ENCODE measurements at regions of chr15 and their contacts with region 1.

Region 1: DNA sequence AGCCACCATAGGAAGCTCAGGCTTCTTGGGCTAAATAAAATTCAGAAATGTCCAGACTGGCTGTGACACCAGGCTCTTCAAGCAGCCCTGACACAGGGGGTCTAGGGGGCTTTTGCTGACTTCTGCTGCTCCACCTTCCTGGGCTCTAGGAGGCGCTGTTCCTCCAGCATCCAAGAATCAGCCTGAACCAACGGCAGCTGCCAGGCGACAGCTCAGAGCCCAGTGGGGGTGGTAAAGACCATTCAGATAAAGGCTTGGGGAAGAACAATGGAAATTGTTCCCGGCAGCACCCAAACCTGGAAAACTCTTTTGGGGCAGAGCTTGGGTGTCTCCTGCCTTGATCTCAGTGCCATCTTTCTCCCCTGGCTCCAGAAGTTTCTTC is 21.6 kb upstream of the PSTPIP1 start:
- DNase-seq: peak; percentile 86
- ATAC-seq: peak; percentile 81
- H3K4me3 Mint-ChIP-seq: no peak overlapping the region
- H3K27ac Mint-ChIP-seq: no peak overlapping the region
- H3K4me1 Mint-ChIP-seq: peaks cover 17% of the 10 kb centered on the region
- H3K27me3 Mint-ChIP-seq: no peaks in the 10 kb centered on the region

Region 2: GRCh38 chr15:76961268-76962011 is 11.9 kb before region 1 on chr15:
- CTCF ChIA-PET with region 1: interaction called, 10 read pairs
- POLR2A ChIA-PET with region 1: no interaction called
- intact Hi-C with region 1: no loop called
- DNase-seq: no peak
- ATAC-seq: no peak
- H3K4me3 Mint-ChIP-seq: no peak overlapping the region
- H3K27ac Mint-ChIP-seq: no peak overlapping the region
- H3K4me1 Mint-ChIP-seq: no peaks in the 10 kb centered on the region
- H3K27me3 Mint-ChIP-seq: peaks cover 4% of the 10 kb centered on the region

Region 3: DNA sequence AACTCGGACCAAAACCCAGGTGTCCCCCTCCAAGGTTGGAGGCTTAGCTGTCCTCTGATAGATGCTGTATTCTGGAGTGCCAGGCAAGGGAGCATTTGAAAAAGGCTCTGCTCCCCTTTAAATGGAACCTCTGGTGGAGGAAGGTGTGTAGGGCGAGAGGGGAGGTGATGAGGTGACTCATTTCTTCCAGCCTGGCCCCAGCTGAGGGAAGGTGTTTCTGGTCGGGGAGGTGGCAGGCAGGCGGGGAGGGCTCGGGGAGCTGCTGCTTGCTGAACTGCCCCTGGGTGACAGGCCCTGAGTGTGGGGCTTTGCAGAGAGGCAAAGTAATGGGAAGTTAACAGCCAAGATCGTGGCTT is 40.4 kb after region 1 on chr15:
- CTCF ChIA-PET with region 1: interaction called, 13 read pairs
- POLR2A ChIA-PET with region 1: no interaction called
- intact Hi-C with region 1: loop called in 1 of 2 experiments (anchors 5 kb)
- DNase-seq: peak; percentile 95
- ATAC-seq: peak; percentile 89
- H3K4me3 Mint-ChIP-seq: peak overlapping the region; percentile 54
- H3K27ac Mint-ChIP-seq: peak overlapping the region; percentile 90
- H3K4me1 Mint-ChIP-seq: peaks cover 92% of the 10 kb centered on the region
- H3K27me3 Mint-ChIP-seq: no peaks in the 10 kb centered on the region

Region 4: DNA sequence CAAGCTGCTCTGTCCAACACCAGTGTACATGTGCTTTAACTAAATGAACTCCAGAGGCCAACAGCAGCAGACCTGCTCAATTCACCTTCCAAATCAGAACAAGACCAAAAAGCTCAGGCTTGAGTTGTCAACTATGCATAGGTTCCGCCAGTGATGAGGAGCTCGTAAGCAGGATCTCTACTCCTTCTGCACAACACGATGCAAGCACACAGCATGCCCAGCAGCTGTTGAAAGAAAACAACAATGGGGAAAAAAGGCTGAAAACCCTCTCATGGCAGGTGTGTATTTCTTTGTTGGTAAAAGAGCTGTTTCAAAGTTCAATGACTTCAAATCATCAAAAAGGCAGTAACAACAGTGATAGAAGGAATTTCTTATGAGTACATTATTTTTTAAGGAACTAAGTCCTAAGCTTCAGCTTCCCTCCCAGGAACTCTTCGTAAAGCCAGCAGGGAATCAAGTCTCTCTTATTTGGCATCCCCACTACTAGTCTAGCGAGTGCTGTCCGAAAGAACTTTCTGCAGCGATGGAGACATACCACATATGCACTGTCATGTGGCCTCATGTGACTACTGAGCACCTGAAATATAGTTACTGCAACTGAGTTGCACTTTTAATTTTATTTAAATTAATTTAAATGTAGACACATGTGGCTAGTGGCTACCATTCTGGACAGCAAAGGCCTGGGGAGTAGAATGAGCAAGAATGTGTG is 73.5 kb after region 1 on chr15:
- CTCF ChIA-PET with region 1: interaction called, 10 read pairs
- POLR2A ChIA-PET with region 1: no interaction called
- intact Hi-C with region 1: no loop called
- DNase-seq: no peak
- ATAC-seq: no peak
- H3K4me3 Mint-ChIP-seq: no peak overlapping the region
- H3K27ac Mint-ChIP-seq: no peak overlapping the region
- H3K4me1 Mint-ChIP-seq: no peaks in the 10 kb centered on the region
- H3K27me3 Mint-ChIP-seq: no peaks in the 10 kb centered on the region

Region 5: GRCh38 chr15:77186594-77187011 is 213.2 kb after region 1 on chr15:
- CTCF ChIA-PET with region 1: no interaction called
- POLR2A ChIA-PET with region 1: no interaction called
- intact Hi-C with region 1: loop called in 1 of 2 experiments (anchors 10 kb)
- DNase-seq: peak; percentile 30
- ATAC-seq: no peak
- H3K4me3 Mint-ChIP-seq: no peak overlapping the region
- H3K27ac Mint-ChIP-seq: no peak overlapping the region
- H3K4me1 Mint-ChIP-seq: peaks cover 55% of the 10 kb centered on the region
- H3K27me3 Mint-ChIP-seq: no peaks in the 10 kb centered on the region

Measured in activated CD4-positive, alpha-beta T cell treated with anti-CD3 and anti-CD28 coated beads for 36 hours (primary cell).